Dendritic cell treated with granulocyte-macrophage colony-stimulating factor and Interleukin-4, amounts not matched to agents 40 ng/mL and 50 ng/mL, for 4 days (primary cell): ENCODE measurements at regions of chr5 and their contacts with region 1.

Region 1: DNA sequence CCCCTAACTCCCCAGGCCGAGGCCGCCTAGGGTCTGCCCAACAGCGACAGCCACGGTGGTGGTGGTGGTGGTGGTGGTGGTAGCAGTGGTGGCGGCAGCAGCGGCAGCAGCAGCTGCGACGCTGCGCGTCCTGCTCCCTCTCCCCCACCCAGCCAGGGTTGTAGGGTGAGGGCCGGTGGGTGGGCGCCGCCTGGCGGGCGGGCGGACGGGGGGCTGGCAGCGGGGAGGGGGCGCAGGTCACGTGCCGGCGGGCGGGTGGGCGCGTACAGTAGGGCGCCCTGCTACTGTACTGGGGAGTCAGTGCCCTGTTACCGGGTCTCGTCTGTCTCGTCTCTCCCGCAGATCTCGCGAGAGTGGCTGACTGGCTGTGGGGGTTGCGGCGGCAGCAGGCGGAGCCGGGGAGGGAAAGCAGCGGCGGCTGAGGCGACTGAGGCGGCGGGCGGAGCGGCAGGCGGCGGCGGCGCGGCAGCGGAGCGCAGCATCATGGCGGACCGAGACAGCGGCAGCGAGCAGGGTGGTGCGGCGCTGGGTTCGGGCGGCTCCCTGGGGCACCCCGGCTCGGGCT is at the start of gene PURA:
- H3K4me3 Mint-ChIP-seq: peak within 1 kb of the TSS; percentile 88
- H3K27ac Mint-ChIP-seq: peak within 1 kb of the TSS; percentile 90
- H3K4me1 Mint-ChIP-seq: peaks cover 63% of the 10 kb centered on the region
- H3K27me3 Mint-ChIP-seq: peaks cover 41% of the 10 kb centered on the region

Region 2: DNA sequence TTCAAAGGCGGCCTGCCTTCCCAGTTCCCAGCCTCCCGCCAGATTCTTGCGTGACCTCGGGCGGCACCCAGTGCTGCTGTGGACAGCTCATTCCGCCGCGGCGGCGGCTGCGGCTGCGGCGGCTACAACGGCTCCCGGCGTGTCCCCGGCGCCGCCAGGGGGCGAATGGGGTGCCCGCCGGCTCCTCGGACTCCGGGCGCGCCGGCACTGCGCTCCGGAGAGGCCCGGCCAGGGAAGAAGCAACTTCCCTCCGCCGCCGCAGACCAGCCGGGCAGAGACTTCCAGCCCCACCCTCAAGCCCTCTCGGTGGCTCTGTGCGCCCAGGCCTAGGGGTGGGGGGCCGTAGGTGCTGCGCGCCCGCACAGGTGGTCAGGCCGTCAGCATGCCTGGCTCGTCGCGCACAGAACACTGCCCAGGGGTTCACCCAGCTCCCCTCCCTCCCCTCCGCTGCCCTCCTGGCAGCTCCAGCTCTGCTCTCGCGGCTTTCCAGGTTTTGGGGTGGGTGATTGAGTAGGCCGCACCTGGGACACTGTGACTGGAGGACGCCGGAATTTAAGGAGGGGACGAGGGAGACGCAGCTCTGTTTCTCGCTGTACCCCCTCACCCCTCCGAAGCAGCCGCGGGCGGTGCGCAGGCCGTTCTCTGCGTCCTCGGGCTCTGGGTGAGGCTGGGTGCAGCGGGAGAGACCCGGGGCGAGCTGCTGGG is 32.2 kb after region 1 on chr5:
- intact Hi-C with region 1: loop called (anchors 2 kb)
- H3K4me3 Mint-ChIP-seq: peak overlapping the region; percentile 59
- H3K27ac Mint-ChIP-seq: peak overlapping the region; percentile 56
- H3K4me1 Mint-ChIP-seq: peaks cover 31% of the 10 kb centered on the region
- H3K27me3 Mint-ChIP-seq: peaks cover 50% of the 10 kb centered on the region